HepG2 (cell line): ENCODE measurements at regions of chr4 and their contacts with region 1.

Region 1: DNA sequence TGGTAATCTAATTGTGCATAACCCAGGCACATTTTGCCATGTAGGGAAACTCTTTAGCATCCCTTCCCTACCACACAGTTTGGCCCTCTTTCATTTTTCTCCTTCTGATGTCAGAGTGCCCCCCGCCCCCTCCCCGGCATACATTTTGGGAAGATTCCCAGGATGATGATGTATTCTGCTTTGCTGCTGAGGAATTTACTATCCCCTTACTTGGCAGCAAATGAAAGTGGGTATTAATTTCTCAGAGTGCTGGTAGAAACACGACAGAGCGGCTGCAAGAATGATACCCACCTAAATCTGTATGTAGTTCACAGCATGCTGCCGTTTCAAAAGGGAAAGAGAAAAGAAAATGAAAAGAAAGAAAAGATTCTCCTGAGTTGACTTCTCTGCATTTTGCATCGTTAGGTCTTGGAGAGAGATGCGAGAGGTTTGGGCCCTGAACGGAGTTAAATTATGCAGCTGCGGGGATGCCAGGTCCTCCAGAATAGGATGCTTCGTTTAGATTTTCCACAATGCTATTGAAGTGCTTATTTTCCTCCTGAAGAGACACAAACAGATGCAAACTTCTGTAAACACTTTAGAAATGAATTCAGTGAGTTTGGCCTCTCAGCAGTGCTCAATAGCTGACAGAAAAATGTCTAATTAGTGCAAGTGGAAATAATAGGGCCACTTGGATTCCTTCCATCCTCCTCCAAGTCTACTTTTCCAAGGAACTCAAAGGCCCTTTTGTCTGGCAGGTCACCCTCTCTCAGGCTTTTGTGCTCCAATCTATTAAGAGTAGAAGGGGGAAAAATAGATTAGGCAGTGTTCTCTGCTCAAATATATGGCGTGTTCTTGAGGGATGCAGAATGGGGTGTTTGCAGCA is 106.1 kb downstream of the ALPK1 start:
- DNase-seq: no peak
- ATAC-seq: no peak
- H3K4me3 ChIP-seq: no peak overlapping the region
- H3K27ac ChIP-seq: no peak overlapping the region
- H3K4me1 ChIP-seq: no peaks in the 10 kb centered on the region
- H3K27me3 ChIP-seq: no peaks in the 10 kb centered on the region; a peak in 1 of 5 replicates
- CTCF ChIP-seq: no peak
- EP300 ChIP-seq: no peak
- POLR2A ChIP-seq: no peak
- RAD21 ChIP-seq: no peak

Region 2: GRCh38 chr4:112515304-112516067 is 112.2 kb after region 1 on chr4:
- CTCF ChIA-PET with region 1: no interaction called
- POLR2A ChIA-PET with region 1: no interaction called
- in situ Hi-C with region 1: no loop called
- intact Hi-C with region 1: loop called (anchors 10 kb)
- DNase-seq: no peak
- ATAC-seq: peak; percentile 76
- H3K4me3 ChIP-seq: peak overlapping the region; percentile 49 to 70 (median 57)
- H3K27ac ChIP-seq: no peak overlapping the region
- H3K4me1 ChIP-seq: peaks cover 22% of the 10 kb centered on the region
- H3K27me3 ChIP-seq: peaks cover 6 to 75% of the 10 kb centered on the region in 2 experiments; a peak in 4 of 5 replicates
- CTCF ChIP-seq: no peak
- EP300 ChIP-seq: no peak
- POLR2A ChIP-seq: no peak
- RAD21 ChIP-seq: no peak